Cardiac septum (tissue), 1 donor: ENCODE measurements at regions of chr5 and their contacts with region 1.

Region 1: DNA sequence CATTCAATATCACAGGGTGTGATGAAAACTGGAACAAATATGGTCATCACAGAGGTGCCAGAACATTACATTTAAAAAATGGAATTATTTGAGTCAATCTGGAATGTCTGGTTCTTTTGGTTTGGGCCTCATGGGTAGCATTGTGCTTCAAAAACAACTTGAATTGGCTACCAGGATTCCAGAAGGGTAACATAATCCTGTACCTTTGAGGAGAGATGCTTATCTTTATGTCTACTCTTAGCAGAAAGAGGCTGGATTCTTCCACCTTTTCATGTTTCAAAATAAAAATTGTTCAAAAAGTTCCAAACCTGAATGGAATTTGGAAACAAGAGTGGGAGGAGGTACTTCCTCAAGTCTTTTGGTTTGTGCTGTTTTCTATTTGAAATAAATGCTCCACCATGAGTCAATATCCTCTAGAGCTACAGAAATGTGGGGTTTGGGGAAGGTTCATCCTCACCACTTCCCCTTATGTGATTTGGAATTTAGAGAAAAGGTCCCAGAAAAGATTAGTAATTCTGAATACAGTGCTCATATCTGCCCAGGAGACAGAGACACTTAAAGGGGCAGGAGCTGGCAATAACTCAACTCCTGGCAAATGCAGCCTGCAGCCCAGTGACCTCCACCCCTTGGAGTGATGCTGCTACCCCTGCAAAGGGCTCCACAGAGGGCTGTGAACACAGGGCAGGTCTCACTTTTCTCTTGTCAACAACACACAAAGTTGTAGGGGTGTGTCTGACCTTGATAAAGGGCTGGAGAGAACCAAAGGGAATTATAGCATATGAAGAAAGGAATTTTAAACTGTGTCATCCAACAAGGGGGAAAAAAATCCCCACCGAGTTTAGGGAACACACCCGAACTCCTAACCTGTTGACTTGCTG is 272.8 kb downstream of the CWC27 start:
- DNase-seq: no peak

Region 2: DNA sequence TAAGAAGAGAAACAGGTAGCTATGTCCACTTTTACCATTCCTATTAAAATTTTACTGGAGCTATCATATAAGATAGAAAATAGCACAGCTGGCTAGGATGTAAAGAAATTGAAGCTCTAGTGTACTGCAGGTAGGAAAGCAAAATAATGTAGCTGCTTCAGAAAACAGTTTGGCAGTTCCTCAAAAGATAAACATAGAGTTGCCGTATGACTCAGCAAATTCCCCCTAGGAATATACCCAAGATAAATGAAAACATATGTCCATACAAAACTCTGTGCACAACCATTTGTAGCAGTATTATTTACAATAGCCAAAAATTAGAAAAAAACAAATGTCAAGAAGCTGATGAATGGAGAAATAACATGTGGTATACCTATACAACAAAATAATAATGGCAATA is 415.8 kb before region 1 on chr5:
- intact Hi-C with region 1: no loop called
- DNase-seq: no peak

Region 3: GRCh38 chr5:65062469-65063083 is 21.1 kb after region 1 on chr5:
- intact Hi-C with region 1: loop called (anchors 2 kb)
- DNase-seq: no peak

Region 4: DNA sequence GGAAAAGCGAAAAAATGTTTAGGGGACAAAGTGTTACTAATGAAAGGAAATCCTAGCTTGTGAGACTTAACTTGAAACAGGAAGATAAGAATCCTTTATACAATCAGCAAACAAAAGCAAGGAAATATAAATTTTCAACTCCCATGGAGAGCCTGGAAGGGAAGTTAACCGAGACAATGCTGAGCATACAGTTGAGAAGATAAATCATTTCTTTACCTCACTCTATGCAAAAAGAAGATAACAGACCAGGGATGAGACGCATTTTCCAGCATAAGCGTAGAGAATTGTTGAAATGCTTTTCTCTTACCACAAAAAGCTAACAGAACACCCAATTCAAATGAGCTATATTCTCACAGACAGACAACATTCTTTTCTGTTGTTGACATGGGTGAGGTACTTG is 36.8 kb after region 1 on chr5:
- intact Hi-C with region 1: loop called (anchors 1 kb)
- DNase-seq: no peak

Region 5: GRCh38 chr5:65133477-65134110 is 92.1 kb after region 1 on chr5:
- intact Hi-C with region 1: no loop called
- DNase-seq: no peak